Psoas muscle (tissue), 8 donors: ENCODE measurements at regions of chr9 and their contacts with region 1.

Region 1: GRCh38 chr9:111896353-111896958 is at the start of gene UGCG:
- DNase-seq: peak; percentile 89 to 93
- ATAC-seq: peak; percentile 97 to 98 (median 98)
- H3K4me3 ChIP-seq: peak within 1 kb of the TSS; percentile 95
- H3K27ac ChIP-seq: peak within 1 kb of the TSS; percentile 92
- H3K4me1 ChIP-seq: peaks cover 39% of the 10 kb centered on the region
- H3K27me3 ChIP-seq: no peaks in the 10 kb centered on the region
- CTCF ChIP-seq: no peak
- total RNA-seq, gene UGCG: 9.6 to 56.2 (median 20.2) TPM

Region 2: GRCh38 chr9:111766066-111766465 is 130.4 kb before region 1 on chr9:
- intact Hi-C with region 1: loop called in 1 of 2 experiments (anchors 5 kb)
- DNase-seq: no peak
- ATAC-seq: no peak
- H3K4me3 ChIP-seq: no peak overlapping the region
- H3K27ac ChIP-seq: no peak overlapping the region
- H3K4me1 ChIP-seq: no peaks in the 10 kb centered on the region
- H3K27me3 ChIP-seq: no peaks in the 10 kb centered on the region
- CTCF ChIP-seq: no peak

Region 3: GRCh38 chr9:111957856-111958652 is 61.6 kb after region 1 on chr9:
- intact Hi-C with region 1: loop called in 1 of 2 experiments (anchors 5 kb)
- DNase-seq: no peak
- ATAC-seq: peak; percentile 68 to 83 (median 74)
- H3K4me3 ChIP-seq: peak overlapping the region; percentile 25
- H3K27ac ChIP-seq: peak overlapping the region; percentile 53
- H3K4me1 ChIP-seq: peaks cover 25% of the 10 kb centered on the region
- H3K27me3 ChIP-seq: peaks cover 0 to 5% (median 2%) of the 10 kb centered on the region in 3 donors
- CTCF ChIP-seq: no peak